ENCODE measurements at regions of chr11 and their contacts with region 1.

Region 1: GRCh38 chr11:101436511-101437142 is 147.2 kb downstream of the TRPC6 start:
- DNase-seq: peak; percentile 10
- H3K4me3 ChIP-seq: no peak overlapping the region
- H3K27ac ChIP-seq: no peak overlapping the region
- H3K4me1 ChIP-seq: no peaks in the 10 kb centered on the region
- H3K27me3 ChIP-seq: no peaks in the 10 kb centered on the region
- CTCF ChIP-seq: peak; percentile 19 to 42
- POLR2A ChIP-seq: no peak

Region 2: GRCh38 chr11:100980156-100980555 is 456.5 kb before region 1 on chr11:
- CTCF ChIA-PET with region 1: interaction called, 10 read pairs
- POLR2A ChIA-PET with region 1: no interaction called
- dilution Hi-C with region 1: no loop called
- intact Hi-C with region 1: no loop called
- DNase-seq: peak; percentile 24
- H3K4me3 ChIP-seq: no peak overlapping the region
- H3K27ac ChIP-seq: no peak overlapping the region
- H3K4me1 ChIP-seq: no peaks in the 10 kb centered on the region
- H3K27me3 ChIP-seq: no peaks in the 10 kb centered on the region
- CTCF ChIP-seq: no peak
- POLR2A ChIP-seq: no peak

Region 3: GRCh38 chr11:102260241-102260640 is 823.6 kb after region 1 on chr11:
- CTCF ChIA-PET with region 1: no interaction called
- POLR2A ChIA-PET with region 1: no interaction called
- dilution Hi-C with region 1: no loop called
- intact Hi-C with region 1: no loop called
- DNase-seq: no peak
- H3K4me3 ChIP-seq: no peak overlapping the region
- H3K27ac ChIP-seq: no peak overlapping the region
- H3K4me1 ChIP-seq: no peaks in the 10 kb centered on the region
- H3K27me3 ChIP-seq: no peaks in the 10 kb centered on the region
- CTCF ChIP-seq: no peak
- POLR2A ChIP-seq: no peak